ENCODE measurements at regions of chr9 and their contacts with region 1.

Region 1: GRCh38 chr9:87336914-87337333 is 160.7 kb upstream of the DAPK1 start:
- DNase-seq: peak; percentile 41 to 76 (median 48)
- ATAC-seq: peak; percentile 88
- H3K4me3 ChIP-seq: no peak overlapping the region
- H3K27ac ChIP-seq: no peak overlapping the region
- H3K4me1 ChIP-seq: peaks cover 0 to 2% of the 10 kb centered on the region in 2 experiments; a peak in 2 of 5 replicates
- H3K27me3 ChIP-seq: no peaks in the 10 kb centered on the region
- CTCF ChIP-seq: peak; percentile 51 to 73 (median 61); a peak in 5 of 6 replicates
- EP300 ChIP-seq: no peak
- POLR2A ChIP-seq: no peak
- RAD21 ChIP-seq: peak; percentile 81 to 82

Region 2: DNA sequence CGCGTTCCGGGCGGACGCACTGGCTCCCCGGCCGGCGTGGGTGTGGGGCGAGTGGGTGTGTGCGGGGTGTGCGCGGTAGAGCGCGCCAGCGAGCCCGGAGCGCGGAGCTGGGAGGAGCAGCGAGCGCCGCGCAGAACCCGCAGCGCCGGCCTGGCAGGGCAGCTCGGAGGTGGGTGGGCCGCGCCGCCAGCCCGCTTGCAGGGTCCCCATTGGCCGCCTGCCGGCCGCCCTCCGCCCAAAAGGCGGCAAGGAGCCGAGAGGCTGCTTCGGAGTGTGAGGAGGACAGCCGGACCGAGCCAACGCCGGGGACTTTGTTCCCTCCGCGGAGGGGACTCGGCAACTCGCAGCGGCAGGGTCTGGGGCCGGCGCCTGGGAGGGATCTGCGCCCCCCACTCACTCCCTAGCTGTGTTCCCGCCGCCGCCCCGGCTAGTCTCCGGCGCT is 160.7 kb after region 1 on chr9 and contains the start of gene DAPK1:
- CTCF ChIA-PET with region 1: interaction called, 3 read pairs
- POLR2A ChIA-PET with region 1: interaction called, 3 read pairs
- in situ Hi-C with region 1: no loop called
- intact Hi-C with region 1: loop called (anchors 2 kb)
- DNase-seq: peak; percentile 69 to 81 (median 73)
- ATAC-seq: peak; percentile 89
- H3K4me3 ChIP-seq: peak within 1 kb of the TSS; percentile 50
- H3K27ac ChIP-seq: peak within 1 kb of the TSS; percentile 43; the same call in 2 of the 3 replicates
- H3K4me1 ChIP-seq: peaks cover 21 to 28% of the 10 kb centered on the region in 2 experiments; a peak in 4 of 5 replicates
- H3K27me3 ChIP-seq: no peaks in the 10 kb centered on the region
- CTCF ChIP-seq: peak; percentile 18 to 53 (median 26); a peak in 4 of 6 replicates
- EP300 ChIP-seq: no peak
- POLR2A ChIP-seq: 0 out of 2 replicates have a peak, but pooled peaks have one; percentile 39
- RAD21 ChIP-seq: peak in 1 of 2 experiments; percentile 47; a peak in 3 of 4 replicates
- polyA plus RNA-seq, gene DAPK1: 1.7 to 2.3 TPM

Region 3: DNA sequence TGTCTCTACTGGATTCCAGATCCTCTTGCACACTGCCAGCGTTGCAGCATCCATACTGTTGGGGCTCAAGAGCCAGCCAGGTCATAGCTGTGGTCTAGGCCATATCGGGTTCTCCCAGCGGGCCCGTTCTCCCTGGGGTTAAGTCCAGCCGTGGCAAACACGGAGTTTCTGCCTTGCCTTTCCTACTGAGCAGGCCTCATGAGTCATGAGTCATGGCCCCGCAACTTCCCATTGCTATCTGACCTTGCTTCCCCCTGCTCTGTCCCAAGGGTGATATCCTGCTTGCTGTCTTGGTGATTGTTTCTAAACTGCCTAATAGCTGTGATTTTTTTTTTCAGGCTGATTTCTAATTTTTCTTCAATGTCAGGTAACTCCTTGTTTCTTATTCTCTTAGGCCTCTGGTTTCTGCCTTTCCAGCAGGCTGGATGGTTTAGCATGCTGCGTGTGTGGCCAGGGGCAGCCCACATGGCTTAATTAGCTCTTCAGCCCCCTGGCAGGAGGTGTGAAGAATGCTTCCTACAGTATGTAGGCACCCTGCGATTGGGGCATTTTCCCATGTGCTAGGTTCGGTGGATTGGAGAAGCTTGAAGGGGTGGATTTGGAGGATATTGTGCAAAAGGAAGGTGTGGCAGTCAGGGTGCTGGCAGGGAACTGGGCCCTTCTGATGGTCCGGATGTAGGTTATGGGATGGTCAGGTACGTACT is 179.4 kb after region 1 on chr9:
- CTCF ChIA-PET with region 1: no interaction called
- POLR2A ChIA-PET with region 1: no interaction called
- in situ Hi-C with region 1: no loop called
- intact Hi-C with region 1: no loop called
- DNase-seq: peak; percentile 49 to 91 (median 66)
- ATAC-seq: peak; percentile 84
- H3K4me3 ChIP-seq: no peak overlapping the region
- H3K27ac ChIP-seq: peak overlapping the region; percentile 84; the same call in 2 of the 3 replicates
- H3K4me1 ChIP-seq: peaks cover 35 to 64% of the 10 kb centered on the region in 2 experiments
- H3K27me3 ChIP-seq: no peaks in the 10 kb centered on the region
- CTCF ChIP-seq: no peak
- EP300 ChIP-seq: peak; percentile 89
- POLR2A ChIP-seq: no peak
- RAD21 ChIP-seq: peak in 1 of 2 experiments; percentile 22; a peak in 2 of 4 replicates

Region 4: DNA sequence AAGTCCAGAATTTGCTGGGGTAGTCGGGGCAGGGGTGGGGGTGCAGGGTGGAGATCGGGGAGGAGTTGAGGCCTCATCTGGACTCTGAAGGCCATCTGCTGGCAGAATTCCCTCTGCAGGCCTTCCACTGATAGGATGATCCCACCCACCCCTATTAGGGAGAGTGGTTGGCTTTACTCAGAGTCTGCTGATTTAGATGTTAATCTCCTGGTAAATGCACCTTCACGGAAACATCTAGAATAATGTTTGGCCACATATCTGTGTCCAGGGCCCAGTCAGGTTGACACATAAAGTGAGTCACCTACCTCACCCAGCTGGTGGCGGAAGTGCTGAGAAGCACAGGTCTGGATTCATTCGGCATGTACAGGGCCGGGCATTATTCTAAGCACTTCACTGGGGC is 210.7 kb after region 1 on chr9:
- CTCF ChIA-PET with region 1: interaction called, 3 read pairs
- POLR2A ChIA-PET with region 1: no interaction called
- in situ Hi-C with region 1: no loop called
- intact Hi-C with region 1: loop called (anchors 5 kb)
- DNase-seq: peak in 2 of 4 experiments; percentile 17 to 32
- ATAC-seq: peak; percentile 59
- H3K4me3 ChIP-seq: no peak overlapping the region
- H3K27ac ChIP-seq: no peak overlapping the region
- H3K4me1 ChIP-seq: peaks cover 8 to 13% of the 10 kb centered on the region in 2 experiments; a peak in 3 of 5 replicates
- H3K27me3 ChIP-seq: no peaks in the 10 kb centered on the region
- CTCF ChIP-seq: peak in 1 of 3 experiments; percentile 27; a peak in 2 of 6 replicates
- EP300 ChIP-seq: no peak
- POLR2A ChIP-seq: no peak
- RAD21 ChIP-seq: 0 out of 4 replicates have a peak, but pooled peaks have one; percentile 10 to 32

Region 5: DNA sequence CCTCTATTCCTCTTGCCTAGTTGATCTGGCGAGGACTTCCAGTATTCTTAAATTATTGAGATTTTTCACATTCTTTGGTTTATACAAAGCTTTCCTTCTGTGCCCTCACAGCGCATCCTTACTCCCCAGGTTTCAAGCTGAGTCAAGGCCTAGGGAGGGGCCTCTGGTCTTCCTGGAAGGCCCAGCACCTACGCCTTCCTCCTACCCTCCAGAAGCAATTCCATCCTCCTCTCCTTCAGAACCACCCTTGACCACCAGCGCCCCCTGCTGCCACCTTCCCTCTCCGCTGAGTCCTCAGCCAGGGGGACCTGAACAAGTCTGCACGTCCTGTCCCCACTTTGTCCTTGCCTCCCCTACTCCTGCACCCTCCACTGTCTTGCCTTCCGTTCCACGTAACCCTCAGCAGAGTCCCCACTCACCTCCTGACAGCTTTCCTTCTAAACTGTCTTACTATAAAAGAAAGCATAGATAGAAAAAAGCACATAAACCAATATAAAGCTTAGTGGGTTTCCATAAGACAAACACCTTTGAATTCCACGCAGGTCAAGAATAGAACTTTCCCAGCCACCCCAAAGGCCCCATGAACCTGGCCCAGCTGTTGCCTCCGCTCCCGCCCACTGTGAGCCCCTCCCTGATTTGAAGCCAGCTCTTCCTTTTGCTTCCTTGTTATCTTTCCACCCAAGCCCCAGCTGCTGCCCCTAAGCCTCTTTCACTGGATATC is 326.0 kb after region 1 on chr9:
- CTCF ChIA-PET with region 1: interaction called, 10 read pairs
- POLR2A ChIA-PET with region 1: no interaction called
- in situ Hi-C with region 1: no loop called
- intact Hi-C with region 1: loop called (anchors 1 kb)
- DNase-seq: peak; percentile 74 to 84 (median 80)
- ATAC-seq: peak; percentile 99
- H3K4me3 ChIP-seq: no peak overlapping the region
- H3K27ac ChIP-seq: no peak overlapping the region
- H3K4me1 ChIP-seq: peaks cover 0 to 7% of the 10 kb centered on the region in 2 experiments; a peak in 4 of 5 replicates
- H3K27me3 ChIP-seq: no peaks in the 10 kb centered on the region
- CTCF ChIP-seq: peak; percentile 78 to 87 (median 84)
- EP300 ChIP-seq: no peak
- POLR2A ChIP-seq: no peak
- RAD21 ChIP-seq: peak; percentile 59 to 85

Region 6: DNA sequence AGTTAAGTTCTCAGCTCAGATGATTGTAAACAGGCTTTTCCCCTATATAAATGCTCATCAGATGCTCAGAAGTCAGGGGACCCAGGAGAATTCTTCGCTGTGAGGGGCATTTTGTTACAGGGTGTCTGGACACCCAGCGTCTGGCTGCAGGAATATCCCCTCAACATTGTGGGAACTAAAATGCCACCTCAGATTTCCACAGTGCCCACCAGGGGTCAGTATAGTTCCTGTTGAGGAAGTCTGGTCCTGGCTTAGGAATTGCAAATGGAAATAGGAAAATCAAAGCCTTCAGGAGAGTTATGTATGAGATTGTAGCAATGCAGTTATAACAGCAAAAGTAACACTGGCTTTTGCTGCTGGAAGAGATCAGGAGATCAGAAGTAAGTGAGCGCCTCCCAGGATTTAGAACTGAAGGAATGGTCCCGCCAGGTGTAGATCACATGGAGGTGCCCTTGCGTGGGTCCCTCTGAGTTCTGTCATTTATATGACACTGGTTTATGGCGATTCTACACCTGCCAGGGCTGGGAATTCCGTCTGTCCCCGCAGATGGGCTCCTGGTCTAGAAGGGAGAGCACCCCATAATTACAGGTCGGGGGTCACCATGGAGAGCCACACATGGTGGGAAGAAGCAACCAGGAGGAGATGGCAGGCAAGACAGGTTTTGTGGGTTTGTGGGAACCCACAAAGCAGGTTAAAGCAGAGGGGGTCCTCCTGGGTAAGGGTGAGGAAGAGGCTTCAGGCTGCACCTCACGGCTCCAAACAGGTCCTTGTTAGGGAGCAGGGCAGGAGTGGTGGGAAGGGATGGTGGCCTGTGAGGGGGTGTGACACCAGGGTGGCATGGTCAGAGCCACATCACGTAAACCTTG is 342.0 kb after region 1 on chr9:
- CTCF ChIA-PET with region 1: interaction called, 3 read pairs
- POLR2A ChIA-PET with region 1: no interaction called
- in situ Hi-C with region 1: loop called (anchors 5 kb)
- intact Hi-C with region 1: no loop called
- DNase-seq: peak; percentile 47 to 69 (median 57)
- ATAC-seq: peak; percentile 63
- H3K4me3 ChIP-seq: no peak overlapping the region
- H3K27ac ChIP-seq: no peak overlapping the region
- H3K4me1 ChIP-seq: peaks cover 9 to 10% of the 10 kb centered on the region in 2 experiments; a peak in 4 of 5 replicates
- H3K27me3 ChIP-seq: no peaks in the 10 kb centered on the region
- CTCF ChIP-seq: peak; percentile 70 to 77 (median 73)
- EP300 ChIP-seq: no peak
- POLR2A ChIP-seq: no peak
- RAD21 ChIP-seq: peak; percentile 54 to 79

Measured in K562 (cell line).